Endothelial cell of umbilical vein (primary cell): ENCODE measurements at regions of chr4 and their contacts with region 1.

Region 1: GRCh38 chr4:4488405-4489404 is 53.1 kb downstream of the STX18 start:
- DNase-seq: peak; percentile 86
- H3K4me3 ChIP-seq: no peak overlapping the region
- H3K27ac ChIP-seq: no peak overlapping the region
- H3K4me1 ChIP-seq: peaks cover 14% of the 10 kb centered on the region
- H3K27me3 ChIP-seq: no peaks in the 10 kb centered on the region
- CTCF ChIP-seq: peak; percentile 75 to 92
- POLR2A ChIP-seq: no peak

Region 2: DNA sequence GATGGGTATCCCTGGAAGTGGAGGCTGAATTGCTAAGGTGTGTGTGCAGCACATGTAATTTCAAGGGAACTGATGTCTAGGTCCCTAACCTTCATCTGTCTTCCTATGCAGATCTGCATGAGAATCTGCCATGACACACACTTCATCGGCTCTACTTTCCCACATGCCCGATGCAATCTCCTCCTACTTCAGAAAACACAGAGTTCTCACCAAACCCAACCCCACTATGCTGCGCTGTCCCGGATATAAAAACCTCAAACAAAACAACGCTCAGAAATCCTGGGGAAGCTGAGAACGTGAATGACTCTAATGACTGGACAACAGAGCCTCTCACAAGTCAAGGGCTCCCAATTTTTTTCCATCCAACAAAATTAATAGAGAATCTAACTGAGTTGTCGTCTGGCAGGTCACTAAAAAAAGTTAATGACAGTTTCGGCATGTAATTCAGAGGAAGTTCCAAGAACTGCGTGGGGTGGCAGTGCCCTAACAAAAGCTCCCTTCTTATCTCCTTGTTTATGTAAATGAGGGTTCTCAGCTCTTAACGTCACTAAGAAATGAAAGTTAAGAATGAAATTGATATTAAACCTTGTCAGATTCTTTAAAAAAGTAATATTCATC is 14.1 kb after region 1 on chr4:
- CTCF ChIA-PET with region 1: interaction called, 20 read pairs
- POLR2A ChIA-PET with region 1: no interaction called
- dilution Hi-C with region 1: no loop called
- intact Hi-C with region 1: loop called (anchors 1 kb)
- DNase-seq: peak; percentile 64
- H3K4me3 ChIP-seq: peak overlapping the region in 1 of 3 experiments; percentile 34
- H3K27ac ChIP-seq: peak overlapping the region; percentile 26
- H3K4me1 ChIP-seq: peaks cover 7% of the 10 kb centered on the region
- H3K27me3 ChIP-seq: no peaks in the 10 kb centered on the region
- CTCF ChIP-seq: no peak
- POLR2A ChIP-seq: no peak

Region 3: GRCh38 chr4:4541661-4542570 is 53.2 kb after region 1 on chr4 and contains the start of gene STX18:
- CTCF ChIA-PET with region 1: no interaction called
- POLR2A ChIA-PET with region 1: no interaction called
- dilution Hi-C with region 1: no loop called
- intact Hi-C with region 1: loop called (anchors 1 kb)
- DNase-seq: peak; percentile 85
- H3K4me3 ChIP-seq: peak within 1 kb of the TSS; percentile 73 to 92 (median 88)
- H3K27ac ChIP-seq: peak within 1 kb of the TSS; percentile 71
- H3K4me1 ChIP-seq: peaks cover 18% of the 10 kb centered on the region
- H3K27me3 ChIP-seq: no peaks in the 10 kb centered on the region
- CTCF ChIP-seq: no peak
- POLR2A ChIP-seq: peak; percentile 60
- total RNA-seq, gene STX18: 29.9 and 31.2 TPM in 2 replicates

Region 4: GRCh38 chr4:4666693-4667621 is 178.3 kb after region 1 on chr4:
- CTCF ChIA-PET with region 1: interaction called, 4 read pairs
- POLR2A ChIA-PET with region 1: no interaction called
- dilution Hi-C with region 1: no loop called
- intact Hi-C with region 1: loop called (anchors 1 kb)
- DNase-seq: no peak
- H3K4me3 ChIP-seq: no peak overlapping the region
- H3K27ac ChIP-seq: no peak overlapping the region
- H3K4me1 ChIP-seq: no peaks in the 10 kb centered on the region
- H3K27me3 ChIP-seq: peaks cover 0 to 4% of the 10 kb centered on the region in 2 experiments
- CTCF ChIP-seq: no peak
- POLR2A ChIP-seq: no peak

Region 5: DNA sequence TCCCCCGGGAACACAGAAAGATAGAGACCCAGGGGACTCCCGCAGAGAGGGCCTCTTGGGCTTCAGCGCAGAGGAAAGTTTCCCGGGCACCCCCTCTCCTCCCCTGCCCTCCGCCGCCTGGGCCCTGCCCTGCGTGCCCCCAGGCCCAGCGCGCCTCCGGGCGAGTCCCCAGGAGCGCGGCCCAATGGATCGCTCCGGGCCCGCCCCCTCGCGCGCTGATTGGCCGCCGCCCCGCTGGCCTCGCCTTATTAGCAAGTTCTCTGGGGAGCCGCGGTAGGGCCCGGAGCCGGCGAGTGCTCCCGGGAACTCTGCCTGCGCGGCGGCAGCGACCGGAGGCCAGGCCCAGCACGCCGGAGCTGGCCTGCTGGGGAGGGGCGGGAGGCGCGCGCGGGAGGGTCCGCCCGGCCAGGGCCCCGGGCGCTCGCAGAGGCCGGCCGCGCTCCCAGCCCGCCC is 370.7 kb after region 1 on chr4 and contains the start of gene MSX1:
- CTCF ChIA-PET with region 1: no interaction called
- POLR2A ChIA-PET with region 1: no interaction called
- dilution Hi-C with region 1: no loop called
- intact Hi-C with region 1: loop called (anchors 5 kb)
- DNase-seq: peak; percentile 73
- H3K4me3 ChIP-seq: peak within 1 kb of the TSS; percentile 35 to 66 (median 61)
- H3K27ac ChIP-seq: no peak within 1 kb of the TSS
- H3K4me1 ChIP-seq: peaks cover 15% of the 10 kb centered on the region
- H3K27me3 ChIP-seq: peaks cover 44 to 61% of the 10 kb centered on the region in 2 experiments
- CTCF ChIP-seq: no peak
- POLR2A ChIP-seq: peak; percentile 59
- total RNA-seq, gene MSX1: 4.1 and 5.0 TPM in 2 replicates

Region 6: DNA sequence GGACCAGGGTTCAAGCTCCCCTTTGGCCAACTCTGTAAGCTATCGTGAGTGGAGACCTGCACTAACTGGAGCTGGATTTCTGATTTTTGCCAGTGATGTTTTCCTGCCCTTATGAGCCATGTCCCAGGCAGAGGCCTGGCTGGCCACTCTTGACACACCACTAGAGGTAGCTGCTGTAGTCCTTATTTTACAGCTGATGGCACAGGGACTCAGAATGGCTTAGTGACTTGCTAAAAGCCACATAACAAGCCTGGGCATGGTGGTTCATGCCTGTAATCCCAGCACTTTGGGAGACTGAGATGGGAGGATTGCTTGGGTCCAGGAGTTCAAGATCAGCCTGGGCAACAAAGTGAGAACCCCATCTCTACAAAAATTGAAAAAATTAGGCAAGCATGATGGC is 497.1 kb after region 1 on chr4:
- CTCF ChIA-PET with region 1: interaction called, 4 read pairs
- POLR2A ChIA-PET with region 1: no interaction called
- dilution Hi-C with region 1: no loop called
- intact Hi-C with region 1: loop called (anchors 2 kb)
- DNase-seq: no peak
- H3K4me3 ChIP-seq: no peak overlapping the region
- H3K27ac ChIP-seq: no peak overlapping the region
- H3K4me1 ChIP-seq: no peaks in the 10 kb centered on the region
- H3K27me3 ChIP-seq: no peaks in the 10 kb centered on the region
- CTCF ChIP-seq: no peak
- POLR2A ChIP-seq: no peak

Region 7: GRCh38 chr4:5142726-5143125 is 654.0 kb after region 1 on chr4:
- CTCF ChIA-PET with region 1: no interaction called
- POLR2A ChIA-PET with region 1: no interaction called
- dilution Hi-C with region 1: no loop called
- intact Hi-C with region 1: loop called (anchors 10 kb)
- DNase-seq: peak; percentile 53
- H3K4me3 ChIP-seq: no peak overlapping the region
- H3K27ac ChIP-seq: no peak overlapping the region
- H3K4me1 ChIP-seq: no peaks in the 10 kb centered on the region
- H3K27me3 ChIP-seq: peaks cover 2 to 3% of the 10 kb centered on the region in 2 experiments
- CTCF ChIP-seq: peak; percentile 48 to 62
- POLR2A ChIP-seq: no peak

Region 8: DNA sequence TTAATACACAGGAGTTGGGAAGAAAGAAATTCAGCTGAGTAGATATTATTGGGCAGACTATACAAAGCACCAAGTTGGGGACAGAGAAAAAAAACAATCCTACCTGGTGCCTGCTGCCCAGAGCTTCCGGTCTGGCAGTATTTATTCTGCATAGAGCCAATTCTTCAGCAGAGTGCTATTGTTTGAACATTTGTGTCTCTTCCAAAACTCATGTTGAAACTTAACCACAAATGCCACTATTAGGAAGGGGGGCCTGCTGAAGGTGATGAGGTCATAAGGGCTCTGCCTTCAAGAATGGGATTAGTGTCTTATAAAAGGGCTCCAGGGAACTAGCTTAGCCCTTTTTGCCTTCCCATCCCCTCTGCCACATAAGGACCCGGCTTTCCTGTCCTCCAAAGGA is 1083.4 kb after region 1 on chr4:
- CTCF ChIA-PET with region 1: no interaction called
- POLR2A ChIA-PET with region 1: no interaction called
- dilution Hi-C with region 1: no loop called
- intact Hi-C with region 1: no loop called
- DNase-seq: no peak
- H3K4me3 ChIP-seq: no peak overlapping the region
- H3K27ac ChIP-seq: no peak overlapping the region
- H3K4me1 ChIP-seq: no peaks in the 10 kb centered on the region
- H3K27me3 ChIP-seq: no peaks in the 10 kb centered on the region
- CTCF ChIP-seq: no peak
- POLR2A ChIP-seq: no peak